ENCODE measurements at regions of chr4 and their contacts with region 1.

Region 1: GRCh38 chr4:7939377-7940108 is at the start of gene AFAP1:
- DNase-seq: peak; percentile 83
- H3K4me3 ChIP-seq: peak within 1 kb of the TSS; percentile 90 to 98 (median 93)
- H3K27ac ChIP-seq: peak within 1 kb of the TSS; percentile 72
- H3K4me1 ChIP-seq: peaks cover 11% of the 10 kb centered on the region
- H3K27me3 ChIP-seq: no peaks in the 10 kb centered on the region
- CTCF ChIP-seq: no peak
- total RNA-seq, gene AFAP1: 22.9 to 36.0 TPM

Region 2: DNA sequence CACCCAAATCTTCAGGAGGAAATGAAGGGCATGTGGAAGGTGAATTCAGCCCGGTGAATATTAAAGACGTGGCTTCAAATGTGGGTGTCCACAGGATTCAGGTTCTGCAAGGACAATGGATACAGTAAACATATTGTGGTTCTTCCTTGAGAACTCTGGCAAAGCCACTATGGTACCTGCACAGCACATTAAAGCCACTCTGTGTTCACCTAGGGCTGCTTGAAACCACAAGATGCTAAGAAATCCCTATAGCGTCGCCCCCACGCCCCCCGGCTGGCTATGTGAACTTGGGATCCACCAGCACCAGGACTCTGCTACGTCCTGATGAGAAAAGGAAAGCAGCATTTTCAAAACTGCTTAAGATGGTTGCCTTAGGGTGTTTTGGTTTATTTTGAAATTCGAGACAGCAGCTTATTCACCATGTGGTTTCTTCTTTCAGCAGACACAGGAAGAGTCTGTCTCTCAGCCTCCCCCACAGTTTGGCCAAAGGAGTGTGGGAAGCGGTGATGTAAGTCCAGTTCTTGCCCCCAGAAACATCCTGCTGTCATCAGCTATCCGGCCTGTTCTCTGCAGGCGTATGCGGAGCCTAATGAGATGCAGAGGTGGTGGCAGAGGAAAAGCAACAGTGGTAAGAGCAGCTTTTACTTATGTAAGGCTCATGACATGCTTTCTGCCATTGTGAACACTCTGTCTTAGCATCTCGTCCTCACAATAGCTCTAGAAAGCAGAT is 111.4 kb before region 1 on chr4:
- CTCF ChIA-PET with region 1: no interaction called
- dilution Hi-C with region 1: no loop called
- in situ Hi-C with region 1: no loop called
- intact Hi-C with region 1: loop called (anchors 5 kb)
- DNase-seq: peak; percentile 96
- H3K4me3 ChIP-seq: peak overlapping the region in 1 of 3 experiments; percentile 1
- H3K27ac ChIP-seq: peak overlapping the region; percentile 73
- H3K4me1 ChIP-seq: peaks cover 22% of the 10 kb centered on the region
- H3K27me3 ChIP-seq: no peaks in the 10 kb centered on the region
- CTCF ChIP-seq: no peak

Region 3: GRCh38 chr4:7876201-7876875 is 63.2 kb before region 1 on chr4:
- CTCF ChIA-PET with region 1: no interaction called
- dilution Hi-C with region 1: no loop called
- in situ Hi-C with region 1: no loop called
- intact Hi-C with region 1: no loop called
- DNase-seq: peak; percentile 66
- H3K4me3 ChIP-seq: no peak overlapping the region
- H3K27ac ChIP-seq: no peak overlapping the region
- H3K4me1 ChIP-seq: peaks cover 22% of the 10 kb centered on the region
- H3K27me3 ChIP-seq: no peaks in the 10 kb centered on the region
- CTCF ChIP-seq: peak; percentile 34 to 49

Region 4: GRCh38 chr4:7973545-7973981 is 34.0 kb after region 1 on chr4:
- CTCF ChIA-PET with region 1: no interaction called
- dilution Hi-C with region 1: no loop called
- in situ Hi-C with region 1: no loop called
- intact Hi-C with region 1: loop called (anchors 1 kb)
- DNase-seq: peak; percentile 90
- H3K4me3 ChIP-seq: no peak overlapping the region
- H3K27ac ChIP-seq: peak overlapping the region; percentile 77
- H3K4me1 ChIP-seq: peaks cover 48% of the 10 kb centered on the region
- H3K27me3 ChIP-seq: no peaks in the 10 kb centered on the region
- CTCF ChIP-seq: no peak

Region 5: DNA sequence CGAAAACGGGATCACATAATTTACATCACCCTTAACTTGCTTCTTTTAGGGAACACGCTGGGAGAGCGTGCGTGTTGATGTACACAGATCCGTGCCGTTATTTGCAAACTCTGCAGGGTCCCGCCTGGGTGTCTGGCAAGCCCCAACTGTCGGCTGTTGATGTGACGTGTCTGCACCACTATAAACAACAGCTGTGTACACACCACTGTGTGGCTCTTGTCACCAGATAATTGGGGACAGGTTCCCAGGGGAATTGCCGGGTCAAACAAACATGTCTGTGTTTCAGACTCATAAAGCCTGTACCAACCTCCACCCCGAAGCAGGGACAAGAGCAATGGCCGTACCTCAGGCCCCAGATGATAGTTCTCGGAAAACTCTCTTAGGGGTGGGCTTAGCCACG is 105.2 kb after region 1 on chr4:
- CTCF ChIA-PET with region 1: no interaction called
- dilution Hi-C with region 1: loop called (anchors 10 kb)
- in situ Hi-C with region 1: no loop called
- intact Hi-C with region 1: no loop called
- DNase-seq: no peak
- H3K4me3 ChIP-seq: no peak overlapping the region
- H3K27ac ChIP-seq: no peak overlapping the region
- H3K4me1 ChIP-seq: no peaks in the 10 kb centered on the region
- H3K27me3 ChIP-seq: peaks cover 7% of the 10 kb centered on the region
- CTCF ChIP-seq: no peak

Measured in mammary epithelial cell (primary cell).